ENCODE measurements at regions of chr13 and their contacts with region 1.

Region 1: GRCh38 chr13:109715902-109716301 is 70.5 kb downstream of the IRS2 start:
- DNase-seq: peak; percentile 53 to 82
- ATAC-seq: peak; percentile 99 to 100
- H3K4me3 ChIP-seq: no peak overlapping the region
- H3K27ac ChIP-seq: peak overlapping the region; percentile 24 to 61 (median 57)
- H3K4me1 ChIP-seq: peaks cover 0 to 6% of the 10 kb centered on the region in 2 donors
- H3K27me3 ChIP-seq: no peaks in the 10 kb centered on the region
- CTCF ChIP-seq: no peak
- POLR2A ChIP-seq: peak in 1 of 2 donors; percentile 12

Region 2: DNA sequence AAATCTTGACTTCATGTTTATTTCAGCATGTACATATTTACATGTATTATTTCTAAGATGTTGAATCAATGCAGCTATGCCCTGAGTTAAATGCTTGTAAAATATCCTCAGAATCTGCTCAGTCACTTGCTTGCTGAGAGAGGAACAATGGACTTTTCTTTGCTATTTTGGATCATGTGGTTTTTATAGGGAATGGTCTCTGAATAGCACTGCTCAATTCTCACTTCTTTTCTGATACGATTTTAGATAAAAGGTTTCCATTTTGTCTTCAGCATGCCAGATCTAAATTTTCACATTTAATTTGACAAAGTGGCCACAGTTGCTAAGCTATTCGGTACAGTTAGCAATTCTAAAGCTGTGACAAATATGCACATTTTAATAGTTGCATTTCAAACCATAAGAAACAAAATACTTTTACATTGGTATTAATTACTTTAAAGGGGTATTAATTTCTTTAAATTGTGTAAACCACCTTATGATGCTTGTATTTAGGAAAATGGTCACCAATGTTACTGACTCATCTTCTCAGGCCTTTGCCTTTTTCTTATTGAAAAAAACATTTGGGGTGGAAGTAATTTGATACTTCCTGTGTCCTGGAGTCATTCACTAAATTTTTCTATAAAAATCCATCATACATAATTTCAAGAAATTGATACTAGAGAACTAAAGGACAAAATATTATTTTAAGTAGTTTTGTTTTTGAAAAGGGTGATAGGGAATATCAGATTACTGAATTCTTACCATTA is 973.0 kb before region 1 on chr13:
- in situ Hi-C with region 1: no loop called
- intact Hi-C with region 1: no loop called
- DNase-seq: no peak
- ATAC-seq: no peak
- H3K4me3 ChIP-seq: no peak overlapping the region
- H3K27ac ChIP-seq: no peak overlapping the region
- H3K4me1 ChIP-seq: no peaks in the 10 kb centered on the region
- H3K27me3 ChIP-seq: no peaks in the 10 kb centered on the region
- CTCF ChIP-seq: no peak
- POLR2A ChIP-seq: no peak

Region 3: DNA sequence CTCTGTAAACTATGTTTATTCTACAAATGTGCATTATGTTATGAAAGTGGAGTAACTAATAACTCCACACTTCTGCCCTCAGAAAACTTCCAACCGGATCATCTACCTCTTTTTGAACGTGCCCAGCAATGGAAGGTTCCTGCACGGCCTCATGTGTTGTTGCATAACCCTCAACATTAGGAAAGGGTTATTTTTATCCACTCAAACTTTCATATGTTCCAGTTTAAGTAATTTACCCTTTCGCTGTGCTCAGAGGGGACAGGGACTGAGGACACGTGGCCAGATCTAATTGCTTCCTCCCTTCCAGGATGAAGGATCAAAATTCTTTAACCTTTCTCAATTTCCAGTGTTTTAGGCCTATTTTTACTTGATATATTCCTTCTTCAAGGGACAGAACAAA is 40.9 kb after region 1 on chr13:
- in situ Hi-C with region 1: no loop called
- intact Hi-C with region 1: loop called (anchors 2 kb)
- DNase-seq: peak in 1 of 2 donors; percentile 39
- ATAC-seq: peak; percentile 87 to 98
- H3K4me3 ChIP-seq: no peak overlapping the region
- H3K27ac ChIP-seq: peak overlapping the region; percentile 68 to 80 (median 76)
- H3K4me1 ChIP-seq: peaks cover 21 to 37% of the 10 kb centered on the region in 2 donors
- H3K27me3 ChIP-seq: no peaks in the 10 kb centered on the region
- CTCF ChIP-seq: no peak
- POLR2A ChIP-seq: no peak

Region 4: GRCh38 chr13:109778102-109778542 is 62.2 kb after region 1 on chr13:
- in situ Hi-C with region 1: no loop called
- intact Hi-C with region 1: loop called (anchors 2 kb)
- DNase-seq: no peak
- ATAC-seq: peak; percentile 82 to 94
- H3K4me3 ChIP-seq: peak overlapping the region in 2 of 4 donors; percentile 52 to 54
- H3K27ac ChIP-seq: peak overlapping the region in 3 of 4 donors; percentile 29 to 53 (median 52)
- H3K4me1 ChIP-seq: peaks cover 58 to 62% of the 10 kb centered on the region in 2 donors
- H3K27me3 ChIP-seq: no peaks in the 10 kb centered on the region
- CTCF ChIP-seq: no peak
- POLR2A ChIP-seq: peak in 1 of 2 donors; percentile 50